ENCODE measurements at regions of chr3 and their contacts with region 1.

Region 1: DNA sequence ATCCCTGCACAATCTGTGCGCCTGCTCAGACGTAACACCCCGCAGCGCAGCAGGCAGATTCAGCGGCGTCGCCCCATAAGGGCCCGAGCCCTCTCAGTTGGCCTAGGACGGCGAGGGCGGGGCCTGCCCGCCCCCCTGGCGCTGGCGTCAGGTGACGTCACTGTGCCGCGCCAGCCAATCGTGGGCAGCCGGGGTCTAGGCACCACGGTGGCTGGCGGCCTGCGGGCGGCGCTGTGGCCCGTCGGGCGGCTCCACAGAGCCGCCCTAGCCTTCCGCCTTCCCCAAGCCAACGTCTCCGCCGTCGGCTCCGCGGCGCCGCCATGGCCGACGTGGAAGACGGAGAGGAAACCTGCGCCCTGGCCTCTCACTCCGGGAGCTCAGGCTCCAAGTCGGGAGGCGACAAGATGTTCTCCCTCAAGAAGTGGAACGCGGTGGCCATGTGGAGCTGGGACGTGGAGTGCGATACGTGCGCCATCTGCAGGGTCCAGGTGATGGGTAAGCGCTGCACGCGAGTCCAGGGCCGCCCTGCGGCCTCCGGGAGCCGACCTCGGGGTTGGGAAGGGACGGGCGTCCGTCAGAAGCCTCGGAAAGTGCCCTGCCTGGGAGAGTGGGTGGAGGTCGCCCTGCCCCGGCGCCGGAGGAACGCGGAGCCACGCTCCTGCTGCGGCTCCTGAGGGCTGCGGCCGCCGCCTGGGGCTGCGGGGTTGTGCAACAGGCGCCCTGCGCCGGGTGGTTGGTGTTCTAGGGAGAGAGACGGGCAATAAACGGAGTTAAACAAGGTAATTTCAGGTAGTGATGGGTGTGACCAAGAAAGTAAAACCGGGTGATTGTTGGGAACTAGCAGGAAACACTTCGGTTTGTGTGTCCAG is at the start of gene RNF7:
- DNase-seq: peak; percentile 98
- ATAC-seq: peak; percentile 92
- H3K4me3 Mint-ChIP-seq: peak within 1 kb of the TSS; percentile 91
- H3K27ac Mint-ChIP-seq: peak within 1 kb of the TSS; percentile 99
- H3K4me1 Mint-ChIP-seq: peaks cover 39% of the 10 kb centered on the region
- H3K27me3 Mint-ChIP-seq: no peaks in the 10 kb centered on the region
- total RNA-seq, gene RNF7: 38.0 to 67.2 TPM

Region 2: GRCh38 chr3:141460097-141460704 is 278.1 kb before region 1 on chr3:
- CTCF ChIA-PET with region 1: no interaction called
- POLR2A ChIA-PET with region 1: no interaction called
- intact Hi-C with region 1: loop called (anchors 1 to 5 kb)
- DNase-seq: peak; percentile 96
- ATAC-seq: peak; percentile 100
- H3K4me3 Mint-ChIP-seq: no peak overlapping the region
- H3K27ac Mint-ChIP-seq: no peak overlapping the region
- H3K4me1 Mint-ChIP-seq: peaks cover 7% of the 10 kb centered on the region
- H3K27me3 Mint-ChIP-seq: no peaks in the 10 kb centered on the region

Region 3: GRCh38 chr3:141845407-141846049 is 107.3 kb after region 1 on chr3:
- CTCF ChIA-PET with region 1: interaction called, 4 read pairs
- POLR2A ChIA-PET with region 1: interaction called, 6 read pairs
- intact Hi-C with region 1: loop called in 1 of 2 experiments (anchors 1 kb)
- DNase-seq: peak; percentile 48
- ATAC-seq: no peak
- H3K4me3 Mint-ChIP-seq: no peak overlapping the region
- H3K27ac Mint-ChIP-seq: no peak overlapping the region
- H3K4me1 Mint-ChIP-seq: peaks cover 10% of the 10 kb centered on the region
- H3K27me3 Mint-ChIP-seq: no peaks in the 10 kb centered on the region

Region 4: GRCh38 chr3:141998669-141999290 is 260.5 kb after region 1 on chr3:
- CTCF ChIA-PET with region 1: interaction called, 4 read pairs
- POLR2A ChIA-PET with region 1: no interaction called
- intact Hi-C with region 1: loop called in 1 of 2 experiments (anchors 1 kb)
- DNase-seq: no peak
- ATAC-seq: no peak
- H3K4me3 Mint-ChIP-seq: no peak overlapping the region
- H3K27ac Mint-ChIP-seq: no peak overlapping the region
- H3K4me1 Mint-ChIP-seq: no peaks in the 10 kb centered on the region
- H3K27me3 Mint-ChIP-seq: no peaks in the 10 kb centered on the region

Region 5: GRCh38 chr3:142279965-142280590 is 541.8 kb after region 1 on chr3:
- CTCF ChIA-PET with region 1: no interaction called
- POLR2A ChIA-PET with region 1: no interaction called
- intact Hi-C with region 1: loop called (anchors 5 kb)
- DNase-seq: peak; percentile 49
- ATAC-seq: peak; percentile 96
- H3K4me3 Mint-ChIP-seq: no peak overlapping the region
- H3K27ac Mint-ChIP-seq: peak overlapping the region; percentile 24
- H3K4me1 Mint-ChIP-seq: peaks cover 7% of the 10 kb centered on the region
- H3K27me3 Mint-ChIP-seq: no peaks in the 10 kb centered on the region

Region 6: GRCh38 chr3:143001369-143002082 is 1263.3 kb after region 1 on chr3 and contains the start of gene U2SURP:
- CTCF ChIA-PET with region 1: no interaction called
- POLR2A ChIA-PET with region 1: no interaction called
- intact Hi-C with region 1: loop called in 1 of 2 experiments (anchors 10 kb)
- DNase-seq: peak; percentile 96
- ATAC-seq: peak; percentile 86
- H3K4me3 Mint-ChIP-seq: peak within 1 kb of the TSS; percentile 91
- H3K27ac Mint-ChIP-seq: peak within 1 kb of the TSS; percentile 99
- H3K4me1 Mint-ChIP-seq: peaks cover 40% of the 10 kb centered on the region
- H3K27me3 Mint-ChIP-seq: no peaks in the 10 kb centered on the region
- total RNA-seq, gene U2SURP: 208 to 248 TPM

Measured in activated CD4-positive, alpha-beta T cell treated with anti-CD3 and anti-CD28 coated beads for 36 hours (primary cell).